ENCODE measurements at regions of chr11 and their contacts with region 1.

Region 1: DNA sequence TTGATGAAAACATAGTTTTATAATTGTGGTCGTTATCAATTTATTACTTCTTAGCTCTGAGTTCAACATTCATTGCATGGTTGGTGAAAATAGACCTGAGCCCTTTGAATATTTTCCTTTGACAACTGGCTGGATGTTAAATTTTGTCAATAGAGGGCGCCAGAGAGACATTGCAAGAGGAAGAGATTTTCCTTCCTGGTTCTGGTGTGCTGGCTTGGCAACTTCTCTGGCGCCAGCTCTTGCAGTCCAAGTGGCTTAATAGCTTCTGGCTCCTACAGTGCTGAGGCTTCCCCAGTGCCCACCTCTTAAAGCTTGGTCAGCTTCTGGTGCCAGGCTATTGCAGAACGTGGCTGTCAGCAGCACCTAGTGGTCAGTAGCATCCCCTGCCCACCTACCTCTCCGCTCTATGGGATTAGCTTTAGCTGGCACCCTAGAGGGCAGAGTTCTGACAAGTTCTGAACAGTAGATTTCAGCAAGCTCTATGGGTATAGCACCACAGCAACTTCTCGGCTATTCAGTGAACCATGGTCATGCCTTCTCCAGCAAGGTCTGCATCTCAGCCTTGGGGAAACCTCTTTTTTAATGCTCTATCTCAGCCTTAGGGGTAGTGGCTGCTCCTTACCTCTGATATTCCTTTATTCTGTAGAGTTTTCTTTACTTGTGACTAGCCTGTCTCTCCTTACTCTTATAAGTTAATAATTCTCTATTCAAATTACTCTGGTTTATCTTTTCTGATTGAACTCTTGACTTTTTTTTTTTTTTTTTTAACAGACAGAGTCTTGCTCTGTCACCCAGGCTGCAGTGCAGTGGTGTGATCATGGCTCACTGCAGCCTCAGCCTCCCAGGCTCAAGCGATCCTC is 59.4 kb downstream of the ACER3 start:
- DNase-seq: peak; percentile 72
- H3K4me3 Mint-ChIP-seq: no peak overlapping the region
- H3K27ac Mint-ChIP-seq: no peak overlapping the region
- H3K4me1 Mint-ChIP-seq: peaks cover 5% of the 10 kb centered on the region
- H3K27me3 Mint-ChIP-seq: no peaks in the 10 kb centered on the region

Region 2: GRCh38 chr11:76734456-76735420 is 185.4 kb before region 1 on chr11:
- CTCF ChIA-PET with region 1: interaction called, 42 read pairs
- DNase-seq: no peak
- H3K4me3 Mint-ChIP-seq: no peak overlapping the region
- H3K27ac Mint-ChIP-seq: no peak overlapping the region
- H3K4me1 Mint-ChIP-seq: peaks cover 6% of the 10 kb centered on the region
- H3K27me3 Mint-ChIP-seq: peaks cover 27% of the 10 kb centered on the region

Region 3: GRCh38 chr11:76807206-76807875 is 112.8 kb before region 1 on chr11:
- CTCF ChIA-PET with region 1: interaction called, 107 read pairs
- DNase-seq: peak; percentile 81
- H3K4me3 Mint-ChIP-seq: no peak overlapping the region
- H3K27ac Mint-ChIP-seq: no peak overlapping the region
- H3K4me1 Mint-ChIP-seq: peaks cover 46% of the 10 kb centered on the region
- H3K27me3 Mint-ChIP-seq: peaks cover 39% of the 10 kb centered on the region

Region 4: DNA sequence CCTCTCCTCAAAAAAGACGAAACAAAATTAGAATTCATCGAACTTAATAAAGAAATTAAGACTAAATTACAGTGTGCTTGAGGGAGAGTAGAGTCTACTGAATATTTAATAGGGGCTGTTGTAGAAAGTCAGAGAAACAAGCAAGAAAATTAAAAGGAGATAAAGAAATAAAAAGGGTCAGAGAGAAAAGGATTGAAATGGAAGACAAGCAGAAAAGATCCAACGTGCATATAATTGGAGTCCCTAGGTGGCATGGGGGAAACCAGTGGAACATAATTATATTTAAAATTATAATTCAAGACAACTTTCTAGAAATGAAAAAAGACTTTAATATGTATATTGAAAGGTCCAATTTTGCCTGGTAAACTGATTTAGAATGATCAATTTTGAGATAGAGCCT is 14.9 kb after region 1 on chr11:
- CTCF ChIA-PET with region 1: no interaction called
- DNase-seq: no peak
- H3K4me3 Mint-ChIP-seq: no peak overlapping the region
- H3K27ac Mint-ChIP-seq: no peak overlapping the region
- H3K4me1 Mint-ChIP-seq: no peaks in the 10 kb centered on the region
- H3K27me3 Mint-ChIP-seq: no peaks in the 10 kb centered on the region

Region 5: DNA sequence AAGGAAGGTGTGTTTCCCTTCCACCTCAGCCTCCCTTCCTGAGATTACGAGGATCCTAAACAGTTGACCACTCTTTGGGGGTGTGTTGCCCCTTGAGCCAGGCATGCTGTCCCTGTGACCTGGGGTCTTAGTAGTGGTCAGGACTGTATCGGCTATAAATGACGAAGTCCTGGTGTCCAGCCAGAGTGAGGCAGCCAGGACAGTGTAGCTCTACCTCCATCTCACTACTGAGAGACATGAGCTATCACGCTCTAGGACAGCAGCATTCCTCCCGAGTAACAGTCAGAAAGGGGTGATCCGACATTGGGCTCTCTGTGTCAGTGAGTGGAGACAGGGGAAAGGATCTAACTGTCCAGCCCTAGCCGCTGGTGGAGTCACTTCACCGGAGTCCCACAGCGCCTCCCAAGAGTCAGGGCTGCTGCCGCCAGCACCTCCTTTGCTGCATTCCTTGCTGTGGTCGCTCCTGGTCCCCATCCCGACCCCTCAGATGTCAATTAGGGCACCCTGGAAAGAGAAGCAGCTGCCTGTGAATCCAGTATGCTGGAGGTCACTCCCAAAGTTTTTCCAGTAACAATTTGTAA is 110.8 kb after region 1 on chr11:
- CTCF ChIA-PET with region 1: interaction called, 12 read pairs
- DNase-seq: no peak
- H3K4me3 Mint-ChIP-seq: no peak overlapping the region
- H3K27ac Mint-ChIP-seq: no peak overlapping the region
- H3K4me1 Mint-ChIP-seq: no peaks in the 10 kb centered on the region
- H3K27me3 Mint-ChIP-seq: peaks cover 46% of the 10 kb centered on the region

Region 6: DNA sequence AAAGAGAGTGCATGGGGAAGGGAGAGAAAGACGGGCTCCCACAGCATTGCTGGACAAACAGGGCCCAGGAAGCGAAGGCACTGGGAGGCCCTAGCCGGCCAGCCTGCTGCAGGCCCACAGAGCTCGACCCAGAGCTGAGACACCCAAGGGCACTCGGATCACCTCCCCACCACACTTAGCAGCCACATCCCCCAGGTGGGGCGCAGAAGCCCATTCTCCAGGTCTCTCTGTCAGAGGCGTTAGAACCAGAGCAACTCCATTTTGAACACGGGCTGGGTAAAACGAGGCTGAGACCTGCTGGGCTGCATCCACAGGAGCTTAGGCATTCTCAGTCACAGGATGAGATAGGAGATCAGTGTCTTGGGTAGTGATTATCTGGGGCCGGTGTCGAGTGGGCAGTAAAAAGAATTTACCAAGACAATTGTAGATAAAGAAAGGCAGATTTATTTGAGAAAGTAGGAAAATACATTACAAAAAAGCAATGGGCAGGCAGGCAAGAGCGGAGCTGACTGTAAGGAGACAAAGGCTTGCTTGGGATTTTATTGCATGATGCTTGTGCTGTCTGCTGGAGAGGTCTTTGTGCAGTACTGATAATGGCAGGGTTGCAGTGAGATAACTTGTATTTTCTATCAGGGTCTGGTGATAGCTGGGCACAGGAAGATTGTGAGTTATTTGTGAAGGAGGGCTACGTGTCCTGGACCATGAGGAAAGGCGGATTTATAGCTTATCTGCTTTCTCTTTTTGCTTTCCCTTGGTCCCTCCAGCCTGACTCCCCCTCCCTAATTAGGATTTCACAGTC is 133.3 kb after region 1 on chr11:
- CTCF ChIA-PET with region 1: interaction called, 10 read pairs
- DNase-seq: no peak
- H3K4me3 Mint-ChIP-seq: no peak overlapping the region
- H3K27ac Mint-ChIP-seq: no peak overlapping the region
- H3K4me1 Mint-ChIP-seq: no peaks in the 10 kb centered on the region
- H3K27me3 Mint-ChIP-seq: peaks cover 8% of the 10 kb centered on the region

Region 7: DNA sequence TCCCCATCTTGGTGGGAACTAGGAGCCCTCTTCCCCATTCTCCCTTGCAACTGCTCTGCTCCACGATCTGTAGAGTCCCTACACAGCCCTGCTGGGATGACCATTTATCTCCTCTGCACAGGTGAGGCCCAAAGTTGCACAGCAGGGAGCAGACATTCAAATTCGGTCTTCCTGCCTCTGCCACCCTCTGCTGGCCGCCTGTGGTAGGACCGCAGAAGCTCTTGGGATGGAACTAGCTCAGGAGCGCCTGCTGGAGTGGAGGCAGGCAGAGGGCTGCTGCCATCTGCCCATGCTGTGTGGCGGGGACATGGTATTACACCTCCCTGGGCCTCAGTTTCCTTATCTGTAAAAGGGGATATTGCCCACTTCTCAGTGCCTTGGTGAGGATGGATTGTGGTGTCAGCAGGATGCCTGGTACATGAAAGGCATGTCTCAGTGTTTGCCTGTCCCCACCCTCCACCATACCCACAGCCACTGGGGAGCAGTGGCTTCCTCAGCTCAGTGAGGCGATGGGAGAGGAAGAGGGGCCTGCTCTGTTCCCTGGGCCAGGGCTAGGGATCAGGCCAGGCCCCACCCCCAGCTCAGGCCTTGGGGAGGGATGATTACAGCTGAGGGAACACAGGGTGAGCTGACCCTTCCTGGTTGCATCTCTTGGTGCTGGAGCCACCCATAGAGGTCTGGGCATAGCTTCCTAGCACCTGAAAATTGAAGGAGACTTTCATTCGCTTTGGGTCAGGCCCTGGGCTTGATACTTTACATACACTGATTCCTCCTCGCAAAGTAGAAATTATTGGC is 171.2 kb after region 1 on chr11:
- CTCF ChIA-PET with region 1: interaction called, 56 read pairs
- DNase-seq: peak; percentile 90
- H3K4me3 Mint-ChIP-seq: no peak overlapping the region
- H3K27ac Mint-ChIP-seq: peak overlapping the region; percentile 64
- H3K4me1 Mint-ChIP-seq: peaks cover 6% of the 10 kb centered on the region
- H3K27me3 Mint-ChIP-seq: peaks cover 8% of the 10 kb centered on the region